ENCODE measurements at regions of chrX and their contacts with region 1.

Region 1: GRCh38 chrX:115560978-115561604 is at the start of gene PLS3:
- DNase-seq: no peak
- H3K4me3 ChIP-seq: peak within 1 kb of the TSS; percentile 65 to 76 (median 71)
- H3K27ac ChIP-seq: peak within 1 kb of the TSS; percentile 87 to 92 (median 91)
- H3K4me1 ChIP-seq: peaks cover 13 to 45% (median 31%) of the 10 kb centered on the region in 4 donors
- H3K27me3 ChIP-seq: peaks cover 0 to 9% (median 0%) of the 10 kb centered on the region in 4 donors
- CTCF ChIP-seq: no peak
- EP300 ChIP-seq: no peak
- POLR2A ChIP-seq: peak; percentile 36
- total RNA-seq, gene PLS3: 76.8 to 84.0 (median 80.8) TPM

Region 2: DNA sequence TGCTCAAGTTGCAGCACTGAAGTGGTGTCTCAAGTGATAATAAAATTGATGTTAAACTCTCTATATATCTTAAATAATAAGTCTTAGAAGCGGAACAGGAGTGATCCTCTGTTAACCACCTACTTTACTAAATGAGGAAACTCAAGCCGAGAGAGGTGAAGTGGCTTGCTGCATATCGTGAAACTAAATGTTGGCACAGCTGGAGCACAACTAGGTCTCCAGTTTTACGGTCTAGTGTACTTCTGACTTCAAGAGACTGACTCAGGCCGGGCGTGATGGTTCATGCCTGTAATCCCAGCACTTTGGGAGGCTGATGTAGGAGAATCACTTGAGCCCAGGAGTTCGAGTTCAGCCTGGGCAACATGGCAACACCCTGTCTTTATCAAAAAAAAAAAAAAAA is 35.6 kb before region 1 on chrX:
- intact Hi-C with region 1: no loop called
- DNase-seq: no peak
- H3K4me3 ChIP-seq: no peak overlapping the region
- H3K27ac ChIP-seq: no peak overlapping the region
- H3K4me1 ChIP-seq: no peaks in the 10 kb centered on the region
- H3K27me3 ChIP-seq: no peaks in the 10 kb centered on the region
- CTCF ChIP-seq: no peak
- EP300 ChIP-seq: no peak
- POLR2A ChIP-seq: no peak

Region 3: DNA sequence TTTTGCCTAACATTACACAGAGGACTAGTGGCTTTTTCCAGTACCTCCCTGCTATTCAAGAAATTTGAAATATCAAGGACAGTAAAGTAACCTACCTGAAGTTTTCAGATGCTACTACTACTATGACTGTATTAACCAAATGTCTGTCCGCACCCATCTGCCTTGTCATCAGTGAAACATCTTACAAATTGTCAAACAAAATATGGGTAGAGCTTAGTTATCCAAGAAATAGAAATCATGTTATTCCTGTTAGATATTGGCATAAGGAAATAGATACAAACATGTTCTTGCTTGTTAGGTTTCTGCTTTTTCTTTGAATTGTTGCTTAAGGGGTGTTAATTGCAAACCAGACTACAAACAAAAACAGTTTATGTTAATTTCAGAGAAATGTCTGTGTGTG is 63.8 kb after region 1 on chrX:
- intact Hi-C with region 1: loop called (anchors 5 kb)
- DNase-seq: no peak
- H3K4me3 ChIP-seq: no peak overlapping the region
- H3K27ac ChIP-seq: peak overlapping the region; percentile 58 to 76 (median 70)
- H3K4me1 ChIP-seq: peaks cover 0 to 76% (median 50%) of the 10 kb centered on the region in 4 donors
- H3K27me3 ChIP-seq: no peaks in the 10 kb centered on the region
- CTCF ChIP-seq: no peak
- EP300 ChIP-seq: no peak
- POLR2A ChIP-seq: no peak

Region 4: DNA sequence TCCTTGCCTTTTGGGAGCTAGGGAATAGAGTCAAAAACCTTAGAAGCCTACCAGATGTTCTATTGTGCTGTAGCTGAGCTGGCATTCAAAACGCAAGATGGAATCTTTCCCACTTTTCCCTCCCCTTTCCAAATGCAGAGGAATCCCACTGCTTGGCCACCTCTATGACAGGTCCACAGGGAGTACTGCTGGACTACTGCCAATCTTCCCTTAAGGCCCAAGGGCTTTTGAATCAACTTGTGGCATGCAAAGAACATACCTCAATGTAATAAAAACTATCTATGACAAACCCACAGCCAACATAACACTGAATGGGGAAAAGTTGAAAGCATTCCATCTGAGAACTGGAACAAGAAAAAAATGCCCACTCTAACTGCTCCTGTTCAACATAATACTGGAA is 470.2 kb after region 1 on chrX:
- intact Hi-C with region 1: no loop called
- DNase-seq: no peak
- H3K4me3 ChIP-seq: no peak overlapping the region
- H3K27ac ChIP-seq: no peak overlapping the region
- H3K4me1 ChIP-seq: no peaks in the 10 kb centered on the region
- H3K27me3 ChIP-seq: no peaks in the 10 kb centered on the region
- CTCF ChIP-seq: no peak
- EP300 ChIP-seq: no peak
- POLR2A ChIP-seq: no peak

Measured in esophagus muscularis mucosa (tissue), 4 donors.